MCF 10A (cell line): ENCODE measurements at regions of chr5 and their contacts with region 1.

Region 1: DNA sequence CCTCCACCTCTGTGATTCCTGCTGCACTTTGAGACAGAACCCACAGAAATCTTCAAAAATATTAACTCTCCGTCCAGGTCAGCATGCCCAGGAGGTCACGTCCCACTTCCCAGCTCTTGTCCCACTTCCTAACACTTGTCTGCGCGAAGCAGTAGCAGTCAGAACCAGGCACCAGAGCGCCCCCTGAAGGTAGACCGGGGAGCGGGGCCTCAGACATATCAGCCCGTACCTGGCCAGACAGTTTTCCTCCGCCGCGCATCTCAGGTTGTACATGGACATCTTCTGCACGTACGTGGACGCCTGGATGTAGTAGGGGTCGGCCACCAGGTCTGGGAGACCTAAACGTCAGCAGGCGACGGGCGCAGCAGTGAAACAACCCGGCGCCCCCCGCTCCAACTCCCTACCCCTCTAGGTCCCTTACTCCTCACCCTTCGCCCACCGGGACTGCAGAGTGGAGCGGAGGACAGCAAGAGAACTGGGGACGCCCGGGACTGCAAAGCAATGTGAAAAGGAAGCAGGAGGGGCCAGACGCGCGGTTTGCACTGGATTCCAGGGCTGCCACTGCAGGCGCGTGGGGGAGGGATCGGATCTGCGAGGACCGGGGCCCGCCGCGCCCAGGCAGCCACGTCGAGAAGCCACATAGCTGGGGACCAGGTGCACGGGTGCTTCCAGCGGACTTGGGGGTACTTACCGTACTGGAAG is 1.2 kb downstream of the LOX start:
- DNase-seq: peak; percentile 94
- H3K4me3 Mint-ChIP-seq: peak overlapping the region; percentile 94
- H3K27ac Mint-ChIP-seq: peak overlapping the region; percentile 74
- H3K4me1 Mint-ChIP-seq: peaks cover 24% of the 10 kb centered on the region
- H3K27me3 Mint-ChIP-seq: no peaks in the 10 kb centered on the region
- CTCF ChIP-seq: peak; percentile 96

Region 2: GRCh38 chr5:121949867-121950266 is 126.9 kb before region 1 on chr5:
- CTCF ChIA-PET with region 1: no interaction called
- POLR2A ChIA-PET with region 1: no interaction called
- intact Hi-C with region 1: no loop called
- DNase-seq: peak; percentile 82
- H3K4me3 Mint-ChIP-seq: no peak overlapping the region
- H3K27ac Mint-ChIP-seq: no peak overlapping the region
- H3K4me1 Mint-ChIP-seq: no peaks in the 10 kb centered on the region
- H3K27me3 Mint-ChIP-seq: no peaks in the 10 kb centered on the region
- CTCF ChIP-seq: peak; percentile 85

Region 3: GRCh38 chr5:121968910-121969607 is 107.8 kb before region 1 on chr5:
- CTCF ChIA-PET with region 1: interaction called, 48 read pairs
- POLR2A ChIA-PET with region 1: interaction called, 84 read pairs
- intact Hi-C with region 1: loop called (anchors 1 kb)
- DNase-seq: peak; percentile 99
- H3K4me3 Mint-ChIP-seq: peak overlapping the region; percentile 38
- H3K27ac Mint-ChIP-seq: peak overlapping the region; percentile 80
- H3K4me1 Mint-ChIP-seq: peaks cover 15% of the 10 kb centered on the region
- H3K27me3 Mint-ChIP-seq: no peaks in the 10 kb centered on the region
- CTCF ChIP-seq: no peak

Region 4: DNA sequence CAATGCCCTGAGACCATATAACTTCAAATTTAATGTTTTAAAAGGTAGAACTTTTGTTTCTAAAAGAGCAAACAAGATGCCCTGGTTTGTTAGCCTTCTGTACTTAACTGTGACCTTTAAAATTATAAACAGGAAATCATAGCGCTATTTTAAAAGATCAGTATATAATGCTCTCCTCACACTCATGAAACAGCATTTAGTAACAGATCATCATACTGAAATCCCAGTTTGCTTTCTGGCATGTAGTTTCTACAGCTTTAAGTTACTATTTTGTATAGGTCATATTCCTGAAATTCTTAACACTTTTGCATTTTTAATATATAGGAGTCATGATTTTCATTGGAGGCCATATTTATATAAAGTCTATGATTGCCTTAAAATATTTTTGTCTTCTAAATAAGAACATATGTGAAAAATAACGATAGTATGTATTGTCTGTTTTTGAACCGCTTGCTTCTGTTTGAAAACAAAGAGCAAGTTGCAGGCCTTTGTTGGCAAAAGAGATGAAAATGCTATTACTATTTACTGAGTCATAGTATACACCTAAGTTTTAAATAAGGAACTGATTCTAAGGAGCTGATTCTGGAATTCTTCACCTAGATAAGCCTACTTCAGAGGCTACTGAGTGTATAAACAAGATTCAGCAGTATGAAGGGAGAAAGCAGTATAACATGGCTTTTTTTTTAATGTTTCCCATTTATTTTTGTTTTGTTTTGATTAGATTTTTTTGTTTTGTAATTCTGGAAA is 94.5 kb before region 1 on chr5:
- CTCF ChIA-PET with region 1: interaction called, 19 read pairs
- POLR2A ChIA-PET with region 1: interaction called, 8 read pairs
- intact Hi-C with region 1: no loop called
- DNase-seq: peak; percentile 34
- H3K4me3 Mint-ChIP-seq: no peak overlapping the region
- H3K27ac Mint-ChIP-seq: peak overlapping the region; percentile 70
- H3K4me1 Mint-ChIP-seq: peaks cover 23% of the 10 kb centered on the region
- H3K27me3 Mint-ChIP-seq: no peaks in the 10 kb centered on the region
- CTCF ChIP-seq: no peak

Region 5: DNA sequence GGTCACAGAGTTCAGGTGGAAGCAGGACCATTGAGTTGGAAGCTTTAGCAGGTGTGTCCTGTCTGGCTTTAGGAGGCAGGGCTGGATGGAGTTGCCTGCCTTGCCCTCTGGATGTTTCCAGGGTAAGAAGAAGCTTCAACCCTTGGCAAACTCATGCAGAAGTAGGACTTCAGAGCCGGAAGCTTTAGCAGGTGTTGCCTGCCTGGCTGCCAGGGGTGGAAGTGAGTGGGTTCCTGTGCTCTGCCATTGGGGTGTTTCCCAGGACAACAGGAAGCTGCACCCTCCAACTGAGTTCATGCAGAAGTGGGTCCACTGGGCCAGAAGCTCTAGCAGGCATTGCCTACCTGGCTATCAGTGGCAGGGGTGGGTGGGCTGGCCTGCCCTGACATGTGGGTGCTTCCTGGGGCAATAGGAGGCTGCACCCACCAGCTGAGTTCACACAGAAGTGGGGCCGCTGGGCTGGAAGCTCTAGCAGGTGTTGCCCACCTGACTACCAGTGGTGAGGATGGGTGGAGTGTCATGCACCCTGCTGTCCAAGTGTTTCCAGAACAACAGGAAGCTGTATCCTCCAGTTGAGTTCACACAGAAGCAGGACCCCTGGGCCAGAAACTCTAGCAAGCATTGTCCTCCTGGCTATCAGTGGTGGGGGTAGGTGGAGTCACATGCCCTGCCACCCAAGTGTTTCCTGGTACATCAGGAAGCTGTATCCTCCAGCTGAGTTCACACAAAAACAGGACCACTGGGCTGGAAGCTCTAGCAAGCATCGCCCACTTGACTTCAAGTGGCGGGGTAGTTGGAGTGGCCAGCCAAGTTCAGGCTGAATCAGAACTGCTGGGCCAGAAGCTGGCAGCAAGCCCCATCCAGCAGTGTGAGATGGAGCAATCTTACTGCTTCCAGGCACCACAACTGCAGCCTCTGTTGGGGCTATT is 23.4 kb before region 1 on chr5:
- CTCF ChIA-PET with region 1: interaction called, 20 read pairs
- POLR2A ChIA-PET with region 1: interaction called, 3 read pairs
- intact Hi-C with region 1: no loop called
- DNase-seq: no peak
- H3K4me3 Mint-ChIP-seq: no peak overlapping the region
- H3K27ac Mint-ChIP-seq: no peak overlapping the region
- H3K4me1 Mint-ChIP-seq: no peaks in the 10 kb centered on the region
- H3K27me3 Mint-ChIP-seq: no peaks in the 10 kb centered on the region
- CTCF ChIP-seq: no peak

Region 6: DNA sequence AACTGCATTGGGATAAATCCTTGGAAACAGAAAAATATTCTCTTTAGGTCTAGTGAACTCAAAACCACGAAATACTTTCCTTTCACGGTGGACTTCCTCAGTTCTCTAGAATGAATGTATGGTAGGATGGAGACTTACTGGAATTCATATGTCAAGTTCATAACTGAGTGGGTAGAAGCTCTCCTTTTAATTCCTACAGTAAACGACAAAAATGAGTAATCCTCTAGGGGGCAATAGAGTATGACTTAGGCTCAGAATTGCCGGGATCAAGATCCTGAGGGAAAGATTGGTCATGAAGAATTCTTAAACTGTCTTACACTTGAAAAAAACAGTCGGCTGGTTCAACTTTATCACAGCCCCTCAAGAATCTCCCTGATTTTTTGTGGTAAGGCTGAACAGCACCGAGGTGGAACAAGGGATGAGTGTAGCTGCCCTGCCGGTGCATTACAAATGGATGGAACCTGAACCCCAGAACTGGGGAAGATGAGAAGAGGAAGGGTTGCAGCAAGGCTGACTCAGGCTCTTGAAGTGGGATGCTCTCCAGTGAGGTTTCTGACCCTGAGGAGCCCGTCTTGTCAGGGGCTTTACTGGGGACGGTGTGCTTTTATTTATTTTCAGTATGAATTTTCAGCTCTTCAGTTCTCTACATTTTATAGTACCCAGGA is 15.3 kb after region 1 on chr5:
- CTCF ChIA-PET with region 1: interaction called, 30 read pairs
- POLR2A ChIA-PET with region 1: interaction called, 17 read pairs
- intact Hi-C with region 1: no loop called
- DNase-seq: peak; percentile 73
- H3K4me3 Mint-ChIP-seq: no peak overlapping the region
- H3K27ac Mint-ChIP-seq: no peak overlapping the region
- H3K4me1 Mint-ChIP-seq: peaks cover 5% of the 10 kb centered on the region
- H3K27me3 Mint-ChIP-seq: no peaks in the 10 kb centered on the region
- CTCF ChIP-seq: peak; percentile 70

Region 7: GRCh38 chr5:122156724-122157325 is 80.0 kb after region 1 on chr5:
- CTCF ChIA-PET with region 1: interaction called, 63 read pairs
- POLR2A ChIA-PET with region 1: interaction called, 4 read pairs
- intact Hi-C with region 1: no loop called
- DNase-seq: peak; percentile 73
- H3K4me3 Mint-ChIP-seq: no peak overlapping the region
- H3K27ac Mint-ChIP-seq: no peak overlapping the region
- H3K4me1 Mint-ChIP-seq: peaks cover 12% of the 10 kb centered on the region
- H3K27me3 Mint-ChIP-seq: no peaks in the 10 kb centered on the region
- CTCF ChIP-seq: peak; percentile 70